ENCODE measurements at regions of chr10 and their contacts with region 1.

Region 1: GRCh38 chr10:15370856-15371701 is at the start of gene FAM171A1:
- DNase-seq: no peak
- H3K4me3 ChIP-seq: peak within 1 kb of the TSS; percentile 80 to 89 (median 83)
- H3K27ac ChIP-seq: peak within 1 kb of the TSS; percentile 45 to 77 (median 73)
- H3K4me1 ChIP-seq: peaks cover 8 to 45% (median 37%) of the 10 kb centered on the region in 4 donors
- H3K27me3 ChIP-seq: no peaks in the 10 kb centered on the region
- CTCF ChIP-seq: peak in 2 of 3 experiments; percentile 28 to 37
- EP300 ChIP-seq: no peak
- POLR2A ChIP-seq: no peak
- total RNA-seq, gene FAM171A1: 7.1 to 15.0 (median 12.6) TPM

Region 2: GRCh38 chr10:15209827-15210509 is 161.1 kb before region 1 on chr10:
- intact Hi-C with region 1: loop called (anchors 2 kb)
- DNase-seq: peak; percentile 95
- H3K4me3 ChIP-seq: peak overlapping the region in 1 of 4 donors; percentile 28
- H3K27ac ChIP-seq: no peak overlapping the region
- H3K4me1 ChIP-seq: peaks cover 5 to 9% (median 6%) of the 10 kb centered on the region in 4 donors
- H3K27me3 ChIP-seq: no peaks in the 10 kb centered on the region
- CTCF ChIP-seq: peak; percentile 72 to 88 (median 81)
- EP300 ChIP-seq: no peak
- POLR2A ChIP-seq: no peak

Region 3: GRCh38 chr10:15262036-15262713 is 108.9 kb before region 1 on chr10:
- intact Hi-C with region 1: loop called (anchors 10 kb)
- DNase-seq: no peak
- H3K4me3 ChIP-seq: no peak overlapping the region
- H3K27ac ChIP-seq: no peak overlapping the region
- H3K4me1 ChIP-seq: peaks cover 0 to 6% (median 0%) of the 10 kb centered on the region in 4 donors
- H3K27me3 ChIP-seq: no peaks in the 10 kb centered on the region
- CTCF ChIP-seq: peak in 2 of 3 experiments; percentile 25 to 31
- EP300 ChIP-seq: no peak
- POLR2A ChIP-seq: no peak

Measured in esophagus muscularis mucosa (tissue), 4 donors.